HCT116 (cell line): ENCODE measurements at regions of chr6 and their contacts with region 1.

Region 1: GRCh38 chr6:91081452-91082067 is 494.7 kb upstream of the MAP3K7 start:
- DNase-seq: peak; percentile 3
- ATAC-seq: no peak
- H3K4me3 ChIP-seq: no peak overlapping the region
- H3K27ac ChIP-seq: no peak overlapping the region
- H3K4me1 ChIP-seq: no peaks in the 10 kb centered on the region
- H3K27me3 ChIP-seq: no peaks in the 10 kb centered on the region
- CTCF ChIP-seq: peak; percentile 5 to 67 (median 38); a peak in 3 of 6 replicates
- POLR2A ChIP-seq: no peak
- RAD21 ChIP-seq: peak; percentile 45

Region 2: GRCh38 chr6:90940812-90941481 is 140.6 kb before region 1 on chr6:
- CTCF ChIA-PET with region 1: interaction called, 10 read pairs
- POLR2A ChIA-PET with region 1: no interaction called
- RAD21 ChIA-PET with region 1: no interaction called
- intact Hi-C with region 1: no loop called
- DNase-seq: peak; percentile 43
- ATAC-seq: peak; percentile 67
- H3K4me3 ChIP-seq: no peak overlapping the region
- H3K27ac ChIP-seq: no peak overlapping the region
- H3K4me1 ChIP-seq: no peaks in the 10 kb centered on the region
- H3K27me3 ChIP-seq: no peaks in the 10 kb centered on the region
- CTCF ChIP-seq: peak; percentile 8 to 61 (median 36); a peak in 3 of 6 replicates
- POLR2A ChIP-seq: no peak
- RAD21 ChIP-seq: peak; percentile 66

Region 3: GRCh38 chr6:90952176-90952575 is 129.4 kb before region 1 on chr6:
- CTCF ChIA-PET with region 1: no interaction called
- POLR2A ChIA-PET with region 1: no interaction called
- RAD21 ChIA-PET with region 1: no interaction called
- intact Hi-C with region 1: no loop called
- DNase-seq: no peak
- ATAC-seq: no peak
- H3K4me3 ChIP-seq: no peak overlapping the region
- H3K27ac ChIP-seq: no peak overlapping the region
- H3K4me1 ChIP-seq: no peaks in the 10 kb centered on the region
- H3K27me3 ChIP-seq: no peaks in the 10 kb centered on the region
- CTCF ChIP-seq: no peak
- POLR2A ChIP-seq: no peak
- RAD21 ChIP-seq: no peak

Region 4: GRCh38 chr6:91013511-91013910 is 68.0 kb before region 1 on chr6:
- CTCF ChIA-PET with region 1: no interaction called
- POLR2A ChIA-PET with region 1: no interaction called
- RAD21 ChIA-PET with region 1: no interaction called
- intact Hi-C with region 1: no loop called
- DNase-seq: no peak
- ATAC-seq: no peak
- H3K4me3 ChIP-seq: no peak overlapping the region
- H3K27ac ChIP-seq: no peak overlapping the region
- H3K4me1 ChIP-seq: no peaks in the 10 kb centered on the region
- H3K27me3 ChIP-seq: no peaks in the 10 kb centered on the region
- CTCF ChIP-seq: no peak
- POLR2A ChIP-seq: no peak
- RAD21 ChIP-seq: no peak